Activated CD4-positive, alpha-beta memory T cell treated with anti-CD3 and anti-CD28 coated beads for 36 hours (primary cell): ENCODE measurements at regions of chr1 and their contacts with region 1.

Region 1: DNA sequence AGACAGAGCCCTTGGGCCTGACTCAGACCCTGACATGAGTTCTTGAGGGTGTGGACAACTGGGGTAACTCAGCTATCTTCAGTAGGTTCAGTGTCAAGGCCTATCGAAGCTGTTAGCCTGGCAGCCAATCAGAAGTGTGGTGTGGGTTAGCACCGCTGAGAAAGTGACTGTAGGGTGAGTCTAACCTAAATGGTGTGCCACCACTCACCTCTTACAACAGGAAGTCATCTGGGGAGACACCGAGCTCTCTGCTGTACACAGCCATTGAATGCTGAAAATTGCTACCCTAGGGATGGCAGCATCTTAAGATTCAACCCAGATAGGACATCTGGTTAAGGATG is 44.6 kb downstream of the RASSF5 start:
- DNase-seq: peak; percentile 92
- H3K4me3 Mint-ChIP-seq: peak overlapping the region; percentile 70
- H3K27ac Mint-ChIP-seq: peak overlapping the region; percentile 91
- H3K4me1 Mint-ChIP-seq: peaks cover 53% of the 10 kb centered on the region
- H3K27me3 Mint-ChIP-seq: no peaks in the 10 kb centered on the region

Region 2: DNA sequence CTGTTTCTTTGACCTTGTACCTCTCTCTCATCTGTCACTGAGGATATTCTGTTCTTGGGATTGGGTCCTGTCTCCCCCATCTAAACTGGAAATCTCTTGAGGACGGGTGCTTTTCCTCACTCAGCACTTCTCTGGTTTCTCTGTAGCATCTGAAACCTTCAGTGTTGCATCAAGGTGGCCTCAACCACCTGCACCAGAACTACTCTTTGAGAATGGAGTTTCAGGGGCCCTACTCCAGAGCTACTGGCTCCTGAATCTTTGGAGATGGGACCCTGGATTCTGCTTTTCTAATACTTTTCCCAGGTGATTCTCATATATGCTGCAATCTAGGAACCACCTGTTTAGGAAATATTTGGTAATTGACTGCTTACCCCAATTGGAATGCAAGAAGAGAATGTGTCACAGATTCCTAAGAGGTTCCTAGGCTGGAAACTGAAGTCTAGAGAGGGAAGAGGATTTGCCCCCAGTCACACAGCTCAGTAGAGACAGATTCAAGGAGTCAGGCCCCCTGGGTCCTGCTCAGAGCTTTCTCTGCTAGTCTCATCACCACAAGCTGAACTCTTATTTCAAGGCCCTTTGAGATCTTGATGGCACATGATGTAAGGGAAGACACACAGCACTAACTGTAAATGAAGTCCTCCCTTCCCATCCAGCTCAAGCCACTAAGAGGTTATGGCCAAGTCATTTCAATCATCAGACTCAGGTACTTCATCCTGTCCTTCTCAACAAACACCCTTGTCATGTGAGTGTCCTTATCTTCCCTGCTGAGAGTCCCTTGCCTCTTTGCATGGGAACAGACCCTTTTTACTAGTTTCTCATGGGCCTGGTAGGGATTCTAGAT is 11.6 kb after region 1 on chr1:
- CTCF ChIA-PET with region 1: interaction called, 114 read pairs
- POLR2A ChIA-PET with region 1: interaction called, 55 read pairs
- intact Hi-C with region 1: loop called (anchors 1 kb)
- DNase-seq: no peak
- H3K4me3 Mint-ChIP-seq: peak overlapping the region; percentile 72
- H3K27ac Mint-ChIP-seq: peak overlapping the region; percentile 99
- H3K4me1 Mint-ChIP-seq: peaks cover 86% of the 10 kb centered on the region
- H3K27me3 Mint-ChIP-seq: no peaks in the 10 kb centered on the region

Region 3: DNA sequence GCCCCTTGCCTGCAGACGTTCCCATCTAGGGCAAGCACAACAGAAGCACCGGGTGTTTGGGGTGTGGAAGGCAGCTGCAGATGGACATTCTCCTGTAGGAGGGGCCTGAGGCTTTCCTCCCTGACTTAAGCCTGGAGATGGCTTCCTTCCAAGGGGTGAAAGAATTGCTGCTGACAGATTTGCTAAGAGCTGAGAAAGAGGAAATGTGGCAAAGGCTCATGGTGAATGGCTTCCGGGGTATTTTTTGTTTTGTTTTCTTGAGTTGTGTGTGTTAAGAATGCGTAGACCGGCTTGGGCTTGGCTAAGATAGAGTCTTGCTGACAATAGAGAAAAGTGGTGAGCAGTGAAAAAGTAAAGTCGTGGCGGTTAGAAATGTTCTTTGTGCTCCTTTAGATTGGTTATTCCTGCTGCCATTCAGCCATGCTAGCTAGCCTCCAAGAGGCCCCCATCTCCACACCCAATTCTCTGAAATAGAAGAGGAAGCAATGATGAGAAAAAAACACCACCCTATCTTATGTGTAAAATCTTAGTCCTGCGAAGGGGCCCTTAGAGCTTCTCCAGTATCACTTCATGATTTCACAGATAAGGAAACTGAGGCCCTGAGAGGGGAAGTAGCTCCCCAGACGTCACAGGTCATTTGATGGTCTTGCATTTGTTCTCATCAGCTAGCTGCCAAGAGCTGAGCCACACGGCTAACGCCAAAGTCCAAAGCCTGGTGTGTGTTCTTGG is 23.4 kb after region 1 on chr1:
- CTCF ChIA-PET with region 1: interaction called, 588 read pairs
- POLR2A ChIA-PET with region 1: interaction called, 546 read pairs
- intact Hi-C with region 1: loop called (anchors 1 kb)
- DNase-seq: peak; percentile 67
- H3K4me3 Mint-ChIP-seq: peak overlapping the region; percentile 59
- H3K27ac Mint-ChIP-seq: peak overlapping the region; percentile 99
- H3K4me1 Mint-ChIP-seq: peaks cover 97% of the 10 kb centered on the region
- H3K27me3 Mint-ChIP-seq: no peaks in the 10 kb centered on the region